ENCODE measurements at regions of chr19 and their contacts with region 1.

Region 1: GRCh38 chr19:39397360-39398296 is 6.5 kb downstream of the MED29 start:
- DNase-seq: peak; percentile 56 to 97 (median 85)

Region 2: DNA sequence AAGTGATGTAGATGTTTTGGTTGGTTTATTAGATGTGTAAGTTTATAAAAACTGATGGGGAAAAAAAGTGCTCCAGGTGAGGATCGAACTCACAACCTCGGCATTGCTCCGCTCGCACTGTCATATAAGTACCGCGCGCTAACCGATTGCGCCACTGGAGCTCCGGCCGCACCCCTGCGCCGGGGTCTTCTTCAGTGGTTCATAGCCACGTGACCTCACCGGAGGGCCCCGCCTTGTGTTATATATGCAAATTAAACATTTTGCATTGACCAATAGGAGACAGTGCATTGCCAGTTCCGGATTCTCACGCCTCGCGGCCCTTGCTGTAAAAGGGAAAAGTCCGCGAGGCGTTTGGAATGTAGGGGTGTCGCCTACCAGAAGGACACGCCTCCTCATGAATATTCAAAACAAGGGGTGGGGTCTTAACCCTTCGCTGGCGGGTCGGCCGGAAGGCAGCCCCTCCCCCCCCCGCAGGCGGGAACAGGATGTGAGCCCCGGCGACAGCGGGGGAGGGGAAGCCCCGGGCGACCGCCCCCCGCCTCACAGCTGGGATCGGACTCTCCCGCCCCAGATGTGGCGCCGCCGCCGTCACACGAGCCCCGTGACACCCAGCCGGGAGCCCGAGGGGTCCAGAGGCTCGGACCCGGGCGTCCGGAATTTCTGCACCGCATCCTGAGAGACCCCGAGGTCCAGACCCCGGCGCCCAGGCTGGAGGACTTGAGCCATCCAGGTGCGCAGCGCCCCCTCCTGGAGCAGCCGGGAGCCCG is 14.7 kb after region 1 on chr19 and contains the start of gene PLEKHG2:
- intact Hi-C with region 1: loop called (anchors 1 kb)
- DNase-seq: peak; percentile 85 to 99 (median 94)

Measured in posterior cingulate gyrus (tissue), 11 donors.